CD4-positive, alpha-beta memory T cell (primary cell): ENCODE measurements at regions of chr13 and their contacts with region 1.

Region 1: GRCh38 chr13:31044377-31045285 is 112.2 kb downstream of the TEX26 start:
- DNase-seq: peak; percentile 75 to 79 (median 78)
- H3K4me3 ChIP-seq: no peak overlapping the region
- H3K4me3 Mint-ChIP-seq: peak overlapping the region in 6 of 8 donors; percentile 18 to 71 (median 64)
- H3K27ac ChIP-seq: peak overlapping the region; percentile 39
- H3K27ac Mint-ChIP-seq: peak overlapping the region; percentile 14 to 89 (median 81)
- H3K4me1 ChIP-seq: peaks cover 35% of the 10 kb centered on the region
- H3K4me1 Mint-ChIP-seq: peaks cover 17 to 34% (median 20%) of the 10 kb centered on the region in 4 donors
- H3K27me3 ChIP-seq: no peaks in the 10 kb centered on the region
- H3K27me3 Mint-ChIP-seq: peaks cover 1 to 2% of the 10 kb centered on the region in 2 donors

Region 2: GRCh38 chr13:30142486-30143211 is 902.0 kb before region 1 on chr13:
- CTCF ChIA-PET with region 1: no interaction called
- POLR2A ChIA-PET with region 1: no interaction called
- intact Hi-C with region 1: loop called (anchors 10 kb)
- DNase-seq: peak; percentile 13 to 64 (median 22)
- H3K4me3 ChIP-seq: no peak overlapping the region
- H3K4me3 Mint-ChIP-seq: peak overlapping the region in 7 of 8 donors; percentile 4 to 74 (median 53)
- H3K27ac ChIP-seq: peak overlapping the region; percentile 27
- H3K27ac Mint-ChIP-seq: peak overlapping the region; percentile 83 to 92 (median 88)
- H3K4me1 ChIP-seq: peaks cover 67% of the 10 kb centered on the region
- H3K4me1 Mint-ChIP-seq: peaks cover 49 to 86% (median 70%) of the 10 kb centered on the region in 4 donors
- H3K27me3 ChIP-seq: no peaks in the 10 kb centered on the region
- H3K27me3 Mint-ChIP-seq: no peaks in the 10 kb centered on the region

Region 3: GRCh38 chr13:30865123-30866049 is 179.2 kb before region 1 on chr13:
- CTCF ChIA-PET with region 1: interaction called, 6 read pairs
- POLR2A ChIA-PET with region 1: no interaction called
- intact Hi-C with region 1: loop called (anchors 1 kb)
- DNase-seq: peak in 4 of 5 donors; percentile 37 to 50 (median 44)
- H3K4me3 ChIP-seq: no peak overlapping the region
- H3K4me3 Mint-ChIP-seq: peak overlapping the region in 1 of 8 donors; percentile 1
- H3K27ac ChIP-seq: no peak overlapping the region
- H3K27ac Mint-ChIP-seq: peak overlapping the region in 1 of 7 donors; percentile 90
- H3K4me1 ChIP-seq: no peaks in the 10 kb centered on the region
- H3K4me1 Mint-ChIP-seq: peaks cover 0 to 6% (median 4%) of the 10 kb centered on the region in 4 donors
- H3K27me3 ChIP-seq: no peaks in the 10 kb centered on the region
- H3K27me3 Mint-ChIP-seq: peaks cover 7% of the 10 kb centered on the region in 2 donors

Region 4: GRCh38 chr13:30918662-30919405 is 125.8 kb before region 1 on chr13:
- CTCF ChIA-PET with region 1: no interaction called
- POLR2A ChIA-PET with region 1: no interaction called
- intact Hi-C with region 1: no loop called
- DNase-seq: no peak
- H3K4me3 ChIP-seq: no peak overlapping the region
- H3K4me3 Mint-ChIP-seq: no peak overlapping the region
- H3K27ac ChIP-seq: no peak overlapping the region
- H3K27ac Mint-ChIP-seq: no peak overlapping the region
- H3K4me1 ChIP-seq: no peaks in the 10 kb centered on the region
- H3K4me1 Mint-ChIP-seq: no peaks in the 10 kb centered on the region
- H3K27me3 ChIP-seq: peaks cover 3% of the 10 kb centered on the region
- H3K27me3 Mint-ChIP-seq: peaks cover 21 to 25% of the 10 kb centered on the region in 2 donors

Region 5: DNA sequence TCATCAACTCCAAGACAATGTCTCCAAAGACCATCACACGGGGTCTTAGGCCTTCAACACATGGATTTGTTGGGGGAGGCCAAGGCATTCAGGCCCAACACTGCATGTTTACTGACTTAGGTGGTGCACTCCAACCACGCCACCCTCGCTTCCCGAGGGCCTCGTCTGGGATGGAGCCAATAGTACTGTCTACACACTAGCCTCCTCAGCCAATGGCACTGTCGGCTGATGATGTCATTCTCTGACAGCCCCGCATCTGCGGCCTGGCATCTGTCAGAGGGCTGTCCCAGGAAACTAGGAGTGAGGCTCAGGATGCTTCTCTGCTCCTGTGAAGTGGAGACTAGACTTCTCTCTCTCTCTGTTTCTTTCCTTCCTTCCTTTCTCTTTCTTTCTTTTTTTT is 15.5 kb before region 1 on chr13:
- CTCF ChIA-PET with region 1: interaction called, 63 read pairs
- POLR2A ChIA-PET with region 1: no interaction called
- intact Hi-C with region 1: no loop called
- DNase-seq: no peak
- H3K4me3 ChIP-seq: no peak overlapping the region
- H3K4me3 Mint-ChIP-seq: no peak overlapping the region
- H3K27ac ChIP-seq: no peak overlapping the region
- H3K27ac Mint-ChIP-seq: no peak overlapping the region
- H3K4me1 ChIP-seq: no peaks in the 10 kb centered on the region
- H3K4me1 Mint-ChIP-seq: no peaks in the 10 kb centered on the region
- H3K27me3 ChIP-seq: no peaks in the 10 kb centered on the region
- H3K27me3 Mint-ChIP-seq: peaks cover 0 to 3% of the 10 kb centered on the region in 2 donors

Region 6: GRCh38 chr13:32315238-32316027 is 1270.8 kb after region 1 on chr13 and contains the starts of genes BRCA2 and ZAR1L:
- CTCF ChIA-PET with region 1: no interaction called
- POLR2A ChIA-PET with region 1: no interaction called
- intact Hi-C with region 1: loop called (anchors 10 kb)
- DNase-seq: peak; percentile 85 to 89 (median 87)
- H3K4me3 ChIP-seq: peak within 1 kb of the TSS; percentile 59 to 81
- H3K4me3 Mint-ChIP-seq: peak within 1 kb of the TSS; percentile 91 to 100 (median 96)
- H3K27ac ChIP-seq: peak within 1 kb of the TSS; percentile 99
- H3K27ac Mint-ChIP-seq: peak within 1 kb of the TSS; percentile 98 to 100 (median 100)
- H3K4me1 ChIP-seq: peaks cover 16% of the 10 kb centered on the region
- H3K4me1 Mint-ChIP-seq: peaks cover 7 to 27% (median 11%) of the 10 kb centered on the region in 4 donors
- H3K27me3 ChIP-seq: no peaks in the 10 kb centered on the region
- H3K27me3 Mint-ChIP-seq: no peaks in the 10 kb centered on the region
- total RNA-seq, gene BRCA2: 3.2 TPM
- total RNA-seq, gene ZAR1L: not detected